ENCODE measurements at regions of chr1 and their contacts with region 1.

Region 1: GRCh38 chr1:11661103-11661502 is 2.9 kb upstream of the FBXO6 start:
- DNase-seq: no peak
- ATAC-seq: no peak
- H3K4me3 Mint-ChIP-seq: no peak overlapping the region
- H3K27ac Mint-ChIP-seq: no peak overlapping the region
- H3K4me1 Mint-ChIP-seq: peaks cover 23% of the 10 kb centered on the region
- H3K27me3 Mint-ChIP-seq: no peaks in the 10 kb centered on the region

Region 2: GRCh38 chr1:11707621-11708276 is 46.6 kb after region 1 on chr1:
- CTCF ChIA-PET with region 1: interaction called, 14 read pairs
- POLR2A ChIA-PET with region 1: interaction called, 4 read pairs
- DNase-seq: no peak
- ATAC-seq: no peak
- H3K4me3 Mint-ChIP-seq: no peak overlapping the region
- H3K27ac Mint-ChIP-seq: no peak overlapping the region
- H3K4me1 Mint-ChIP-seq: peaks cover 16% of the 10 kb centered on the region
- H3K27me3 Mint-ChIP-seq: peaks cover 17% of the 10 kb centered on the region

Measured in activated CD8-positive, alpha-beta T cell treated with anti-CD3 and anti-CD28 coated beads, Interleukin-2, amount 10 ng/mL, durations not matched to agents 7 days and 5 days (primary cell).